ENCODE measurements at regions of chr2 and their contacts with region 1.

Region 1: DNA sequence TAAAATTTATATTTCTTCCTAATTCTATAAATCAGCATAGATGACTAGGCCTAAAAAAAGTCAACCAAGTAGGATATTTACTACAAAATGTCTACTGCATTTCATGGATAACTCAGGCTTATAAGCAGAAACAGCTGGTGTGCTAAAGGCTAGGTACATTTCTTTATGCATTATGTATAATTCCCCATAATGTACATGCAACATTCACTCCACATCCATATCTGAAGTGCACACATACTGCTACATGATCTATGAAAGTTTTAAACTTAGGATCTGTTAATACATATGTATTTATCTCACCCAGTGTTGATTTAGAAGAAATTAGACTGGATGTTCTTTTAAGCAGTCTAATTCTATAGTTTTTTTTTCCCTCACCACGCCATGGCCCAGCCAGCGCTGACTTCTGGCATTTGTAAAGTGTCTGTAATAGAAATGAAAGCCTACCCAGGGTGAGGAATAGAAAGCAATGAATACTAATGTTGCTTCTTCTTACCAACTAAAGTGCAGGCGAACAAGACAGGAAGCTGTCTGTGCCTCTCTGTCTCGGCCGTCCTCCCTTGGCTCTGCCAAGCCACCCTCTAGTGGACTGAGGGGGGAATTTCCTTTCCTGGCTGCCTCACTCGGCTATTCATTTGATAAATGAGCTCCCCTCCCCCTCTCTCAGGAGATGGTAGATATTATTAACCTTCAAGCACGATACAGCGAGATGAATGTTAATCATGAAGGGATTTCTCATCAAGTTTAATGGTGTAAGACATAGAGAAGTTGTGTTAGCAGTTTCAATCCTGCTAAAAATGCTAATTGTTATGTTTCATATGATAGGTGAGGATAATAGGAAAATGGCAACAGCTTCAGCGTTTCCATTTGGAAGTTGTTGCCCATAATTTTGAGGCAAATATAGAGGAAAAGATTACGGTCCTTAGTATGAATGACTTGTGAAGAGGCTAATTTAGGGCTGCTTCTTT is 384.5 kb downstream of the MTX2 start:
- DNase-seq: peak; percentile 98
- H3K4me3 ChIP-seq: peak overlapping the region; percentile 20
- H3K27ac ChIP-seq: peak overlapping the region; percentile 99
- H3K4me1 ChIP-seq: peaks cover 87% of the 10 kb centered on the region
- H3K27me3 ChIP-seq: no peaks in the 10 kb centered on the region
- CTCF ChIP-seq: peak; percentile 90

Region 2: GRCh38 chr2:176104325-176105077 is 549.3 kb before region 1 on chr2:
- CTCF ChIA-PET with region 1: interaction called, 8 read pairs
- POLR2A ChIA-PET with region 1: interaction called, 17 read pairs
- intact Hi-C with region 1: no loop called
- DNase-seq: peak; percentile 84
- H3K4me3 ChIP-seq: peak overlapping the region; percentile 73
- H3K27ac ChIP-seq: peak overlapping the region; percentile 94
- H3K4me1 ChIP-seq: peaks cover 29% of the 10 kb centered on the region
- H3K27me3 ChIP-seq: no peaks in the 10 kb centered on the region
- CTCF ChIP-seq: peak; percentile 23; the same call in 1 of the 2 replicates

Region 3: GRCh38 chr2:176554101-176555048 is 99.4 kb before region 1 on chr2:
- CTCF ChIA-PET with region 1: interaction called, 7 read pairs
- POLR2A ChIA-PET with region 1: no interaction called
- intact Hi-C with region 1: loop called (anchors 1 kb)
- DNase-seq: peak; percentile 86
- H3K4me3 ChIP-seq: peak overlapping the region; percentile 53
- H3K27ac ChIP-seq: peak overlapping the region; percentile 80
- H3K4me1 ChIP-seq: peaks cover 19% of the 10 kb centered on the region
- H3K27me3 ChIP-seq: no peaks in the 10 kb centered on the region
- CTCF ChIP-seq: peak; percentile 82

Region 4: DNA sequence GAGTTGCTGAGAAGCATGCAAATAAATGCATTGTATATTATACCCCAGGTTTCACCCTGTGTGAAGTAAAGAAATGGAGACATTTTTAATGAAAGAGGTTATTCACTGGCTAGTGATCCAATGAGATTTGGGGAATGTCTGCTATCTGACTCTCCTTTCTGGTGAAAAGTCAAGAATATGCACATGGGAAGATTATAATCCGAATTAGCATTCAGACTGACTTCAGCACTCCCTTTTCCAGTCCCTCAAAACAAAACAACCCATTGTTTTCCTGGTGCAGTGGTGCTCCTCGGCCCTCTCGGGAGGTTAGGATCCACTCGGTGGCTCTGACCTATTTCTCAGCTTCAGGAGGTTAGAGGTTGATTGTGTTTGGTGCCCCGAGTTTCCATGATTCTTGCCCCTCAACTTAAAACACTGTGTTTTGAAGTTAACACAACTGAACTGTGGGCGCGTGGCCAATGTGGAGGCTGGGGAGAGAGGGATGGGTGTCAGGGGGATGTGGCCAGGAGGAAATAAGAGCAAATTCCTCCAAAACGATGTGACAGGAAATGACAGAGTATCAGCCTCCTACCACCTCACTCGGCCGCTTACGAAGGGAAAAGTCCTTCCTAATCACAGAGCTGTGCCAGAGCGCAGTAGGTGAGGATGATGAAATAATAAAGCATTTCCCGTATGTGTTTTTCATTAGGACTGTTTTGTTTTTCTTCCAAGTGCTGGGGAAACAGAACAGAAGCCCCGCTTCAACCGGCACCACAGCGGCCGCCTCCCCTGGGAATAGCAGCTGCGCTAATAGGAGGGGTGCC is 55.6 kb after region 1 on chr2:
- CTCF ChIA-PET with region 1: no interaction called
- POLR2A ChIA-PET with region 1: interaction called, 5 read pairs
- intact Hi-C with region 1: loop called (anchors 1 kb)
- DNase-seq: peak; percentile 98
- H3K4me3 ChIP-seq: peak overlapping the region; percentile 3
- H3K27ac ChIP-seq: peak overlapping the region; percentile 97
- H3K4me1 ChIP-seq: peaks cover 68% of the 10 kb centered on the region
- H3K27me3 ChIP-seq: no peaks in the 10 kb centered on the region
- CTCF ChIP-seq: no peak

Region 5: GRCh38 chr2:176931588-176932563 is 278.1 kb after region 1 on chr2:
- CTCF ChIA-PET with region 1: no interaction called
- POLR2A ChIA-PET with region 1: no interaction called
- intact Hi-C with region 1: loop called (anchors 5 kb)
- DNase-seq: peak; percentile 90
- H3K4me3 ChIP-seq: peak overlapping the region; percentile 22
- H3K27ac ChIP-seq: peak overlapping the region; percentile 59
- H3K4me1 ChIP-seq: peaks cover 22% of the 10 kb centered on the region
- H3K27me3 ChIP-seq: peaks cover 8% of the 10 kb centered on the region
- CTCF ChIP-seq: no peak

Region 6: DNA sequence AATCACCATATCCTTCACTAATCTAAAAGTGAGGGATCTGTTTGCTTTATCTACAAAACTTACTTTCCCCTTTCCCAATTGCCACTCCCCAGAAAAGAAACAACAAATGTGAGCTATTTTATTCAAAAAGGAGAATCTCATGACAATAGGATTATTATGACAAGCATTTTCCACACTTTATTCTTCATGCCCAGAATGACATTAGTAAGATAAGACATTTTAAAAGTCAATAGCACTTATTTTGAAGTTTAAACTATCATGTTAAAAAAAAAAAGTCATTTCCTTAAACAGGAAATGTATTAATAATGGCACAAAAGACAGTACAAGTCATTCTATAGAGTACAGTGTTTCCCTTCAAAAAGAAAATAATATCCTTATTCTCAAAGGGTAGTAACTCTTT is 500.0 kb after region 1 on chr2:
- CTCF ChIA-PET with region 1: interaction called, 14 read pairs
- POLR2A ChIA-PET with region 1: interaction called, 23 read pairs
- intact Hi-C with region 1: no loop called
- DNase-seq: peak; percentile 62
- H3K4me3 ChIP-seq: no peak overlapping the region
- H3K27ac ChIP-seq: no peak overlapping the region
- H3K4me1 ChIP-seq: peaks cover 16% of the 10 kb centered on the region
- H3K27me3 ChIP-seq: no peaks in the 10 kb centered on the region
- CTCF ChIP-seq: no peak

Measured in A673 (cell line).